RWPE1 (cell line): ENCODE measurements at regions of chr17 and their contacts with region 1.

Region 1: DNA sequence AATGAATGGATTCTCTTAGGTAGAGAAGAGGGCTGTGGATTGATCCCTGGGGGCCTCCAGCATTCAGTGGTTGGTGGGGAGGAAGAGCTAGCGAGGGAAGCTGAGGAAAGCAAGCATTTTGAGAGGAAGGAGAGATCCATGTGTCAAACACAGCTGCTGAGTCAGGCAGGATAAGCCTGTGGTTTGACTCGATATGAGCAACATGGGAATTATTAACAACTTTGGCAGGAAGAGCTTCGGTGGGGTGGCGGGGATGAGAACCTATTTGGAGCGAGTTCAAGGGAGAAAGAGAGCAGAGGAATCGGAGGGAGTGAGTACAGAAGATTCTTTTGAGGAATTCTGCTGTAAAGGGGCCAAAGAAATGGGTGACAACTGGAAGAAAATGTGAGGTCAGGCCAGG is 59.5 kb upstream of the CDC42EP4 start:
- DNase-seq: peak; percentile 49
- H3K27ac ChIP-seq: no peak overlapping the region
- CTCF ChIP-seq: no peak

Region 2: GRCh38 chr17:73247726-73248125 is 123.6 kb before region 1 on chr17:
- CTCF ChIA-PET with region 1: interaction called, 69 read pairs
- POLR2A ChIA-PET with region 1: no interaction called
- DNase-seq: no peak
- H3K27ac ChIP-seq: no peak overlapping the region
- CTCF ChIP-seq: no peak

Region 3: GRCh38 chr17:73255671-73256181 is 115.6 kb before region 1 on chr17:
- CTCF ChIA-PET with region 1: interaction called, 69 read pairs
- POLR2A ChIA-PET with region 1: no interaction called
- DNase-seq: peak; percentile 68
- H3K27ac ChIP-seq: no peak overlapping the region
- CTCF ChIP-seq: peak; percentile 97

Region 4: DNA sequence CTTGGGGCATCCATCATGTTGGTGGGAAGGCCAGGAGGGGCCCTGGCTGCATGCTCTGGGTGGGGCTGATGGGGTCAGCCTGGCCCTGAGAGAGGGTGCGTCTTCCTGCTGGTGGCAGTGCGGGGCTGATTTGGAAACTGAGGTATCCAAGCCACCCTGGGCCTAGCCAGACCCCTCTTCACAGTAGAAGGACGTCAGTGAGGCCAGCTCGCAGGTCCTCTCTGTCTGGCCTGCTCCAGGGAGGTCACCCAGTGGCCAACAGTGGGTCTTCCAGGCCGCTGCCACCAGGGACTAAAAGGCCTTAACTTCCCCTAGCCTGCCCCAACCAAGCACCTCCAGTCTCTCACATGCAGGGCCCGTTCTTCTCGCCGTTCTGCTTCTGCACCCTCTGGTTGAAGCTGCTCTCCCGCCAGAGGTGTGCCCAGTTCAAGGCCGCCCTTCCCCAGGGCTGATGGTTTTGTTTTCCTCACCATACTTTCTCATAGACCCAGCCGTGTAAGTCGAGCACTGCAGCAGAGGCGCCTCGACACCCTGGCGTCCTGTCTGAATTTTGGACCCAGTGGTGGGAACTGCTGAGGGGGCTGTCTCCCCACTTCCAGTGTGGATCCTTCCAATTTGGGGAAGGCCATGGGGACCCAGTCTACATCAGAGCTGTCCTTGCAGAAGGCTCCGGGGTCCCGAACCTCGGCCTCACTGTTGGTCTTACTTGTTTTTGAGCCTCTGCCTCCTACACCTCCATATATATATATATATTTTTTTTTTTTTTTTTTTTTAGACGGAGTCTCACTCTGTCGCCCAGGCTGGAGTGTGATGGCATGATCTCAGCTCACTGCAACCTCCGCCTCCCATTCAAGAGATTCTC is 16.6 kb before region 1 on chr17:
- CTCF ChIA-PET with region 1: no interaction called
- POLR2A ChIA-PET with region 1: no interaction called
- DNase-seq: no peak
- H3K27ac ChIP-seq: peak overlapping the region; percentile 31
- CTCF ChIP-seq: no peak